T-cell (primary cell): ENCODE measurements at regions of chr7 and their contacts with region 1.

Region 1: GRCh38 chr7:5665094-5666025 is 116.1 kb downstream of the RNF216 start:
- DNase-seq: peak; percentile 17 to 86 (median 50)
- ATAC-seq: peak; percentile 68 to 83 (median 74)
- H3K4me3 ChIP-seq: no peak overlapping the region
- H3K4me3 Mint-ChIP-seq: no peak overlapping the region
- H3K27ac ChIP-seq: no peak overlapping the region
- H3K27ac Mint-ChIP-seq: peak overlapping the region in 1 of 2 donors; percentile 29
- H3K4me1 ChIP-seq: peaks cover 4 to 13% of the 10 kb centered on the region in 2 experiments
- H3K4me1 Mint-ChIP-seq: peaks cover 21 to 33% (median 26%) of the 10 kb centered on the region in 3 donors
- H3K27me3 ChIP-seq: no peaks in the 10 kb centered on the region
- H3K27me3 Mint-ChIP-seq: no peaks in the 10 kb centered on the region

Region 2: DNA sequence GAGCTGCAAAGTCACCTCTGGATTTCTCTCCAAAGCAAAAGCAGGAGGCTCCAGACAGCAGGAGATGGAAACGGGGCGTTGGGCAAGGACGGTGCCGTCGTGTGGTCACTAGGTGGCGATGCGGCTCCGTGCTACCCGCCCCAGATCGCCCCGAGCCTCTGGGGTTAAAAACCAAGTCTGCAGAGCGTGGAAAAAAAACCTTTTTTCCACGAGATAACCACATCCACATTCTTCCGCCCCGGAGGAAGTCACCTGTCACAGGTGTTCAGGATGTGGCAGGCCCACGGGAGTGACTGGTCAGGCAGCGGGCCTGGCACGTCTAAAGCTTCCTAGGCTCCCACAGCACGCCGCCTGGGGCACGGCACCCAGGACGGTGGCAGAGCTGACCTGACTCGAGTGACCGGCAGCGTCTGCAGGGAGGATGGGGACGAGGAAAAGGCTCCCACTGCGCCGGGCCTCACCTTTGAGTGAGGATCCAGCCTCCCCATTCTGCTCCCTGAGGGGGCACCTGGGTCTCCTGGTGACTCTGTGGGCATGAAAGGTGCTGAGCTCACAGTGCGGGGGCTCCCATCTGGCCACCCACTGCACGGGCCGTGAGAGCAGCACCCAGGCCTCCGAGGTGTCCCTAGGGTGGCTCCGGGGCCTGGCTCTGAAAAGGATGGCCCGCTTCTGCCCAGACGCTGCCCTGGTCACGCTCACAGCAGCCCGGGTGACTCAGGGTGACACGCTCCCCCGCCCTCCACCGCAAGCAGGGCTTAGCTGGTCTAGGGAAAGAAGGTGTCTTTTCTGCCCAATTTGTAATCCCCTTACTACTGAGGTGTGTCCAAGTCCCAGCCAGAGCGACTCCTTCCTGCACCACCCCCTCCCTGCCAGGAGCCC is 170.4 kb before region 1 on chr7:
- CTCF ChIA-PET with region 1: interaction called, 7 to 31 read pairs
- POLR2A ChIA-PET with region 1: no interaction called
- DNase-seq: peak; percentile 47 to 88 (median 71)
- ATAC-seq: peak; percentile 83 to 89 (median 88)
- H3K4me3 ChIP-seq: peak overlapping the region in 1 of 2 donors; percentile 8
- H3K4me3 Mint-ChIP-seq: peak overlapping the region; percentile 6 to 49 (median 9)
- H3K27ac ChIP-seq: no peak overlapping the region
- H3K27ac Mint-ChIP-seq: no peak overlapping the region
- H3K4me1 ChIP-seq: peaks cover 4 to 37% of the 10 kb centered on the region in 2 experiments
- H3K4me1 Mint-ChIP-seq: peaks cover 29 to 36% (median 33%) of the 10 kb centered on the region in 3 donors
- H3K27me3 ChIP-seq: no peaks in the 10 kb centered on the region
- H3K27me3 Mint-ChIP-seq: no peaks in the 10 kb centered on the region

Region 3: DNA sequence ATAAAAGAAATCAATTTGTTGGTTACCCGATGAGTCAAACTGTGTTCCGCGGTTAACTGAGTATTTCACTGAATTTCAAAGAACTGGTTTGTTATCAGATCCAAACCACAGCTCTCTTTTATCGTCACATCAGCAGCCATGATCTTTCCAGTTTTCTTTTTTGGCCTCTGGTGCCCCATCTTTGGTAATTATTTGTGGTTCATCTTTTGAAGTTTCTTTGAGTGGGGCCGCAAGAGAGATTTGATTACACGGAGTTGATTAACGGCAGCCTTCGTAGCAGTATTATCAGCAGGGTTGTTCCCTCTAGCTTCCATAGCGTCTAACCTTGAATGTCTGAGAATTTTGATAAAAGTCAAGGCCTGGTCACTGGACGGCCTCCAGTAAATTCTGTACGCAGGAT is 86.9 kb before region 1 on chr7:
- CTCF ChIA-PET with region 1: no interaction called
- POLR2A ChIA-PET with region 1: no interaction called
- DNase-seq: no peak
- ATAC-seq: no peak
- H3K4me3 ChIP-seq: no peak overlapping the region
- H3K4me3 Mint-ChIP-seq: no peak overlapping the region
- H3K27ac ChIP-seq: no peak overlapping the region
- H3K27ac Mint-ChIP-seq: no peak overlapping the region
- H3K4me1 ChIP-seq: no peaks in the 10 kb centered on the region
- H3K4me1 Mint-ChIP-seq: peaks cover 0 to 8% (median 7%) of the 10 kb centered on the region in 3 donors
- H3K27me3 ChIP-seq: peaks cover 0 to 40% of the 10 kb centered on the region in 2 experiments
- H3K27me3 Mint-ChIP-seq: peaks cover 12 to 28% of the 10 kb centered on the region in 2 donors

Region 4: GRCh38 chr7:5647816-5648215 is 17.5 kb before region 1 on chr7:
- CTCF ChIA-PET with region 1: interaction called in 1 of 2 experiments, 3 read pairs
- POLR2A ChIA-PET with region 1: interaction called in 1 of 2 experiments, 12 read pairs
- DNase-seq: no peak
- ATAC-seq: no peak
- H3K4me3 ChIP-seq: no peak overlapping the region
- H3K4me3 Mint-ChIP-seq: no peak overlapping the region
- H3K27ac ChIP-seq: no peak overlapping the region
- H3K27ac Mint-ChIP-seq: no peak overlapping the region
- H3K4me1 ChIP-seq: peaks cover 7 to 18% of the 10 kb centered on the region in 2 experiments
- H3K4me1 Mint-ChIP-seq: peaks cover 22 to 31% (median 27%) of the 10 kb centered on the region in 3 donors
- H3K27me3 ChIP-seq: no peaks in the 10 kb centered on the region
- H3K27me3 Mint-ChIP-seq: no peaks in the 10 kb centered on the region

Region 5: DNA sequence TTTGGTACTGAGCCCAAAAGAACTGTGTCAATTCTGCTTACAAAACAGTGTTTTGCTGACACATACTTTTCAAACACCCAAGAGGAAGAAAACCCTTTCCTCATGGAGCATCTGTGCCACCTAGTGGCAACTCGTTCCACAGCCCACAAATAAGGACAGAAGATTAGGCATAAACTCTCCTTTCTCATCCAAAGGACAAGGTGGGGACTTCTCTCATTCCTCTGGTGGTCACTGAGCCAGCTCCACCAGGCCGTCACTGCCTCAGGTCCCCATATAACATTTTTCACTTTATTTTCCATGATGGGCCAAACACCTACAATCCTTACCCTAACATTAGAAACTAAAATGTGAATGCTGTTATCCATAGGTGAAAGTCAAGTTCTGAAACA is 39.2 kb after region 1 on chr7:
- CTCF ChIA-PET with region 1: interaction called, 9 to 10 read pairs
- POLR2A ChIA-PET with region 1: interaction called in 1 of 2 experiments, 4 read pairs
- DNase-seq: peak; percentile 46 to 89 (median 69)
- ATAC-seq: peak in 3 of 4 experiments; percentile 43 to 47 (median 45)
- H3K4me3 ChIP-seq: no peak overlapping the region
- H3K4me3 Mint-ChIP-seq: no peak overlapping the region
- H3K27ac ChIP-seq: no peak overlapping the region
- H3K27ac Mint-ChIP-seq: peak overlapping the region in 1 of 2 donors; percentile 0
- H3K4me1 ChIP-seq: peaks cover 24 to 27% of the 10 kb centered on the region in 2 experiments
- H3K4me1 Mint-ChIP-seq: peaks cover 39 to 41% (median 39%) of the 10 kb centered on the region in 3 donors
- H3K27me3 ChIP-seq: no peaks in the 10 kb centered on the region
- H3K27me3 Mint-ChIP-seq: no peaks in the 10 kb centered on the region